AG04450 (cell line): ENCODE measurements at regions of chr1 and their contacts with region 1.

Region 1: DNA sequence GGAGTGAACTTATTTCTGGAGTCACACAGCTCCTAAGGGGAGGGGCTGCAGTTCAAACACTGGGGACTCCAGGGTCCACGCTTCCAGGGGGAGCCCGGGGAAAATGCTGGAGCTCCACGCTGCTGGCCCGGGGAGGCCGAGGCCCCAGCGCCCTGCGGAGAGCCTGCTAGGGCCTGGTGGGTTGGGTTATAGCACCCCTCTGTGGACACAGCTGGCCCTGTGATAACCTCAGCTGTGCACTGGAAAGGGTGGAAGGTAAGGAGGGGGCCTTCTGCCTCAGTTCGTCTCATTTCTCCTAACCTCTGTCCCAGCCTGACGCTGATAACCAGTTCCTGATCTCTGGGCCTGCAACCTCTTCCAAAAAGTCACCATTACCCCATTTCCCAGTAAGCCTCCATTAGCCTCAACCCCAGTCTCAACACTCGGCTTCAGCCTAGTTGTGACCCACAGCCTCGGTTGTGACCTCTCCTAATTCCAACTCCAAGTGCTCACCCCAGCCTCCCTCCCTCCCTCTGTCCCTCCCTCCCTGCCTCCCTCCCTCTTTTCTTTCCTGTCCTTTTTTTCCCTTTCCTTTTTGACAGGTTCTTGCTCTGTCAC is 7.1 kb downstream of the NBL1 start:
- DNase-seq: no peak
- H3K4me3 ChIP-seq: no peak overlapping the region
- H3K27ac ChIP-seq: peak overlapping the region; percentile 21
- H3K27me3 ChIP-seq: no peaks in the 10 kb centered on the region
- CTCF ChIP-seq: peak; percentile 83

Region 2: GRCh38 chr1:19363536-19364152 is 287.6 kb before region 1 on chr1:
- CTCF ChIA-PET with region 1: interaction called, 10 read pairs
- POLR2A ChIA-PET with region 1: no interaction called
- DNase-seq: no peak
- H3K4me3 ChIP-seq: no peak overlapping the region
- H3K27ac ChIP-seq: no peak overlapping the region
- H3K27me3 ChIP-seq: no peaks in the 10 kb centered on the region
- CTCF ChIP-seq: no peak

Region 3: DNA sequence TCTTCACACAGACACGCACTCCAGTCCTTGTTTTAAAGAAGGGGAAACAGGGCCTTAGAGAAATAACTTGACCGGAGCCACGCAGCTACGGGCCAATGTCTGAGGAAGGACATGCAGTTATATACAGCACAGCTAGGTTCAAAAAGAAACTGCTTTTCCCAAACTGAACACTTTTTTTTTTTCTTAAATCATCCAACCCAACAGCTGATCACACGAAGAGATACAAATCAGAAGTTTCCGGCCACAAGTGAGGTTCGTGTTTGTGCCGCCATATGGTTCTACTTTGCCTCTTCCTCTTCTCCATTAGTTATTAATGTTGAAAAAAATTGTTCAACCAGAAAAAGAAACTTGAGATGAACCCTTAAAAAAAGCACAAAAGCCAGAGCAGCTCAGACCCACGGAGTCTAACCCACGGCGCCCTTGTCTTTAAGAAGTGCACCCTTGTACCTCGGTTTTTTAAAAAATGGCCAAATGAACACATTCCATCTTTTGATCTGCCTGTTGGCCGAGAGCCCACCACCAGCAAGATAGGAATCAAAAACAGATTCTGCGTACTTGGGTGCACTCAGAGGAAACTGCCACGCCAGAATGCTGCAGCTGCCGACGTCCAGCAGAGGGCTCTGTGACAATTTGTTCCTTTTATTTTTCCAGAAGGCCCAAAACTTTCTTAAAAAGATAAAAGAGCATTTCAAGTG is 260.2 kb before region 1 on chr1:
- CTCF ChIA-PET with region 1: interaction called, 10 read pairs
- POLR2A ChIA-PET with region 1: no interaction called
- DNase-seq: peak; percentile 64
- H3K4me3 ChIP-seq: peak overlapping the region; percentile 25
- H3K27ac ChIP-seq: peak overlapping the region; percentile 81
- H3K27me3 ChIP-seq: no peaks in the 10 kb centered on the region
- CTCF ChIP-seq: peak; percentile 92

Region 4: GRCh38 chr1:19398309-19398760 is 252.9 kb before region 1 on chr1:
- CTCF ChIA-PET with region 1: interaction called, 18 read pairs
- POLR2A ChIA-PET with region 1: interaction called, 5 read pairs
- DNase-seq: peak; percentile 90
- H3K4me3 ChIP-seq: no peak overlapping the region
- H3K27ac ChIP-seq: peak overlapping the region; percentile 81
- H3K27me3 ChIP-seq: no peaks in the 10 kb centered on the region
- CTCF ChIP-seq: peak; percentile 73

Region 5: GRCh38 chr1:19465123-19465522 is 186.1 kb before region 1 on chr1:
- CTCF ChIA-PET with region 1: interaction called, 11 read pairs
- POLR2A ChIA-PET with region 1: no interaction called
- DNase-seq: no peak
- H3K4me3 ChIP-seq: no peak overlapping the region
- H3K27ac ChIP-seq: no peak overlapping the region
- H3K27me3 ChIP-seq: no peaks in the 10 kb centered on the region
- CTCF ChIP-seq: no peak